ENCODE measurements at regions of chr17 and their contacts with region 1.

Region 1: GRCh38 chr17:66906321-66907278 is 57.9 kb upstream of the CACNG4 start:
- DNase-seq: no peak
- H3K4me3 ChIP-seq: no peak overlapping the region
- H3K27ac ChIP-seq: no peak overlapping the region
- H3K4me1 ChIP-seq: peaks cover 11% of the 10 kb centered on the region
- H3K27me3 ChIP-seq: no peaks in the 10 kb centered on the region
- CTCF ChIP-seq: peak; percentile 45 to 72 (median 62)
- POLR2A ChIP-seq: no peak

Region 2: GRCh38 chr17:66654106-66654740 is 252.4 kb before region 1 on chr17:
- intact Hi-C with region 1: no loop called
- DNase-seq: no peak
- H3K4me3 ChIP-seq: no peak overlapping the region
- H3K27ac ChIP-seq: no peak overlapping the region
- H3K4me1 ChIP-seq: peaks cover 24% of the 10 kb centered on the region
- H3K27me3 ChIP-seq: no peaks in the 10 kb centered on the region
- CTCF ChIP-seq: no peak
- POLR2A ChIP-seq: no peak

Region 3: GRCh38 chr17:66715745-66716156 is 190.8 kb before region 1 on chr17:
- intact Hi-C with region 1: loop called (anchors 5 kb)
- DNase-seq: peak in 1 of 2 donors; percentile 70
- H3K4me3 ChIP-seq: no peak overlapping the region
- H3K27ac ChIP-seq: no peak overlapping the region
- H3K4me1 ChIP-seq: no peaks in the 10 kb centered on the region
- H3K27me3 ChIP-seq: no peaks in the 10 kb centered on the region
- CTCF ChIP-seq: peak; percentile 34 to 68 (median 46)
- POLR2A ChIP-seq: no peak

Measured in vagina (tissue), 2 donors.